ENCODE measurements at regions of chr18 and their contacts with region 1.

Region 1: DNA sequence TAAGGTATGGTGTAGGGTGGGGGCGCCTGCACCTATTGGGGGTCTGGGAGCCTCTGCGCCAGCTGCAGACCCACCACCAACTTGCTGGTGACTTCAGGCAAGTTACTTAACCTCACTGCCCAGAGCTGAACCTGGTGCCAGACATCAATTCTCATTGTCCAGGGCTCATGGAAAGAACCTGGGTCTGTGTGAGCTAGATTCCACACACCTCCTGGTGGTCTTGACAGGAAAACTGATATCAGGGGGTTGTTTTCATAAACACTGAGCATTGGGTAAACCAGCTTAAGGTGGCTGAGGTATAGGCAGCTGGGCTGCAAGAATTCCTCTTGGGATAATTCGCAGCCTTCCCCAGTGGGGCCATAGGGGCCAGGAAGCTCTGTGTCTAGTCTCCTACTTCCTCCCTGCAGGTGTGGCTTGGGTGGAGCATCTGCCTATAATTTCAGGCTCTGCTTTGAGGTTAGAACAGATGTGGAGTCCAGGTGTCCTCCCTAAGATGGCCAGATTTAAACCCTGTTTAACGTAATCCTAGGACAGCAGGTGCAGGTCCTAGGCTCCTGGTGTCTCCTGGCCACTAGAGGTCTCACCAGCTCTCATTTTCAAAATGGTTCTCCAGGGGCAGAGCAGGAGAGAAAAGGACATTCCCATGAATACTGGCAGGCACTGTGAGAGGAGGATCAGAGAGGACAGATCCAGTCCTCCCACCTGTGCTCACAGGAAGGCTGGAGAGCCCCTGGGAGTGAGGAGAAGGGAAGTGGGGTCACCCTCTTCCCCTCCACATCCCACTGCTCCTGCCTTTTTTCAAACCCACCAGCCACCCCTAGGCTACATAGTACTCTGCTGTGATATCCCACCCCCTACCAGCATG is 100.4 kb upstream of the SMAD2 start:
- DNase-seq: peak; percentile 80
- H3K4me3 Mint-ChIP-seq: no peak overlapping the region
- H3K27ac Mint-ChIP-seq: no peak overlapping the region
- H3K4me1 Mint-ChIP-seq: peaks cover 25% of the 10 kb centered on the region
- H3K27me3 Mint-ChIP-seq: no peaks in the 10 kb centered on the region
- CTCF ChIP-seq: peak; percentile 76

Region 2: GRCh38 chr18:48100651-48101165 is 69.9 kb after region 1 on chr18:
- CTCF ChIA-PET with region 1: interaction called, 4 read pairs
- POLR2A ChIA-PET with region 1: no interaction called
- intact Hi-C with region 1: loop called (anchors 10 kb)
- DNase-seq: no peak
- H3K4me3 Mint-ChIP-seq: no peak overlapping the region
- H3K27ac Mint-ChIP-seq: no peak overlapping the region
- H3K4me1 Mint-ChIP-seq: no peaks in the 10 kb centered on the region
- H3K27me3 Mint-ChIP-seq: peaks cover 51% of the 10 kb centered on the region
- CTCF ChIP-seq: no peak

Region 3: DNA sequence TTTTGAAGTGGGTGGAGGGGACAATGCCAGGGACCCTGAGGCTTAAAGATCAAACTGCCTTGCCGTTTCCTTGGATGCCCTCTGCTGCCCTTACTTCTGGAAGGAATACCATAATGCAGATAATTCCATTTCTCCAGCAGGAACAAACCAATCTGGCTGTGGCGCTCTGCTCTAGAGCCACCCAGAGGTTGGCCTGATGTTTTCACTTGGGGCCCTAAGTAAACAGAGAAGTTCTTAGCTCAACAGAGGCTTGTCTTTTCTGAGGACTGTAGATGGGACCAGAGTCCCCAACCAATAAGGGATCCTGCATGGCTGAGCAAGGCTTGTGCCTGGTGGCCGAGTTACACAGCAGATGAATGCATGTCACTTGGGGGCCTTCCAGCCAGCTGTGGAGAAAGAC is 148.1 kb after region 1 on chr18:
- CTCF ChIA-PET with region 1: interaction called, 3 read pairs
- POLR2A ChIA-PET with region 1: no interaction called
- intact Hi-C with region 1: loop called (anchors 5 kb)
- DNase-seq: no peak
- H3K4me3 Mint-ChIP-seq: no peak overlapping the region
- H3K27ac Mint-ChIP-seq: peak overlapping the region; percentile 70
- H3K4me1 Mint-ChIP-seq: no peaks in the 10 kb centered on the region
- H3K27me3 Mint-ChIP-seq: peaks cover 24% of the 10 kb centered on the region
- CTCF ChIP-seq: no peak

Region 4: GRCh38 chr18:48345596-48345995 is 314.7 kb after region 1 on chr18:
- CTCF ChIA-PET with region 1: interaction called, 13 read pairs
- POLR2A ChIA-PET with region 1: no interaction called
- intact Hi-C with region 1: loop called (anchors 1 kb)
- DNase-seq: peak; percentile 55
- H3K4me3 Mint-ChIP-seq: no peak overlapping the region
- H3K27ac Mint-ChIP-seq: no peak overlapping the region
- H3K4me1 Mint-ChIP-seq: peaks cover 10% of the 10 kb centered on the region
- H3K27me3 Mint-ChIP-seq: no peaks in the 10 kb centered on the region
- CTCF ChIP-seq: peak; percentile 55